HEK293T (cell line): ENCODE measurements at regions of chr5 and their contacts with region 1.

Region 1: DNA sequence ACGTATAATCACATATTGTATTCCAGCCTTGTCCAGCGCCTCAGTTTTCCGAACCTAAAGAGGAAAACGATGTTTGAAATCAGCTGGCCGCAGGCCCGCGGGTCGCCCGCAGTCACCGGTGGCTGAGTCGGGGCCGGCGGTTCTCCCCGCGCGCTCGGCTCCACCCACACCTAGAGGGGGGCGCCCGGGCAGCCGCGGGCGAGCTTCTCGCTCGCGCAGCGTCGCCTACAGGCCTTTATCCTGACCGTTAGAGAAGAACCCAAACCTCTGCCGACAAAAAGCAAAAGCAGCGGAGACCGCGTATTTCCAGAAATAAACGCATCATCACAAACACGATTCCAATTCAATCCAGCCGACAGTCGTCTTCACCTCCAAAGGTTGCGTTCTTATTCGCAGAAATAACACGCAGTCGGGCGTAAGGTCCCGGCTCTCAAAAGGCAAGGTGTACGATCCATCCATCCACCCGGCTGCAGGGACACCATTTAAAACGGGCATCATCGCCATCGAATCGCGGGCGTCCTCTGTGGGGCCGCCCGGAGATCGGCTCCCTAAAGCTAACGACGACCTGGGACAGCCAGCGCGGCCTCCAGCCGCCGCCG is 680 bp upstream of the NIPBL start:
- DNase-seq: peak; percentile 47

Region 2: DNA sequence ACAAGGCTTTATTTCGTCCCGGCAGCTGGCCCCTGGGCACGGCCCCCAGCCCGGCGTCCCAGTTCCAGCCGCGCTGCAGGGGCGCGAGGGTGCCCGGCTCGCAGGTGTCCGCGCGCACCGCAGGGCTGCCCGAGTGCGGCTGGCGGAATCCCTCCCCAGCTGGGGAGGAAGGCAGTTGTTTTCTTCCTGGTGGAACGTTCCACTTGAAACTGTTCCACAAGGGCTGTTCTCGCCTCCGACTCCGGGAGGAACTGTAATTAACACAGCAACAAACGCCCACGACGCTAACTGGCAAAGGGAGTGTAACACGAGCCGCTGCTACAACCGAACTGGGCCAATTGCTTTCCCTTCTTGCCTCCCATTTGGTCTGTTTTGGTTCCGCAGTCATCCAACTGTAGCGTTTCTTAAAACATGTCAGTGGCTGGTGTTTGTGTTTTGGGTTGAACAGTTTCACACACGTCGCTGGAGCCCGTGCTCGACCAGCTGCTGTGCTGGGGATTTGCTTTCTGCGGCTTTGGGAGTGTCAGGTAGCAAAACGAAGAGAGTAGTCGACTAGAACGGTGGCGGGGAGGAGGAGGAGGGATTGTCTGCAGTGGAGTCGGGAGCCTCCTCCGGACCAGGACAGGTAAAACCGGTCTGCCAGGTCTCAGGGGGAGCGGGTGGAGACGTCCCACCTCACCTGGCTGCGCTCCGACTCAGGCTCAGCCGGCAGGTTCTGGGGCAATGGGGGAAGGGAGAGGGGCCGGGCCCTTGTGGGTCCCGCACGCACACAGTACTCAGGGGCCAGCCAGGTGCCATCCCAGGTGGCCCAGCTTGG is 130.9 kb before region 1 on chr5:
- CTCF ChIA-PET with region 1: interaction called, 6 read pairs
- POLR2A ChIA-PET with region 1: interaction called, 35 read pairs
- DNase-seq: peak; percentile 41

Region 3: DNA sequence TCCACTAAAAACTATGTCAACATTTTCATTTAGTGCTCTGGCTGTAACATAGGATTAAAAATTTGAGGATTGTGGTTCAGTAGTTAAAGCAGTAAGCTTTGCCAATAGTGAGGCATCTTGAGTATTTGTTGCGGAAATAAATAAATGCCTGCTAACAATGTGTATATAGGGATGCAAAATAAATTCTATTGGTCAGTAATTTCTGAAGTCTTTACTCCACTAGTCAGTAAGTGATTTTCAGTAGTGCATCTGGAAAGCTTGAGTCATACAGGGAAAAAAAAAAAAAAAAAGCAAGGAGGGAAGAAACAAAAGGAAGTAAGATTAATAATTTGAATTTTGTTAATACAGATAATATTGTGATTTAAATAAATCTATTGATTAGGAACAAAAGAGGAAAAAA is 21.7 kb after region 1 on chr5:
- CTCF ChIA-PET with region 1: no interaction called
- POLR2A ChIA-PET with region 1: no interaction called
- DNase-seq: no peak

Region 4: DNA sequence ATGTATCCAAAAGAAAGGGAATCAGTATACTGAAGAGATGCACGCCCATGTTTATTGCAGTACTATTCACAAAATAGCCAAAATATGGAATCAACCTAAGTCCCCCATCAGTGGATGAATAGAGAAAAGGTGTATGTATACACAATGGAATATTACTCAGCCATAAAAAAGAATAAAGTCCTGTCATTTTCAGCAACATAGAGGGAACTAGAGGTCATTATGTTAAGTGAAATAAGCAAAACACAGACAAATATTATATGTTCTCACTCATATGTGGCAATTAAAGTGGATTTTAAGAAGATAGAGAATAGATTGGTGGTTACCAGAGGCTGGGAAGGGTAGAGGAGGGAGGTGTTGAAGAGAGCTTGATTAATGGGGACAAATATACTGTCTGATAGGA is 89.3 kb after region 1 on chr5:
- CTCF ChIA-PET with region 1: no interaction called
- POLR2A ChIA-PET with region 1: no interaction called
- DNase-seq: no peak